ENCODE measurements at regions of chr12 and their contacts with region 1.

Region 1: DNA sequence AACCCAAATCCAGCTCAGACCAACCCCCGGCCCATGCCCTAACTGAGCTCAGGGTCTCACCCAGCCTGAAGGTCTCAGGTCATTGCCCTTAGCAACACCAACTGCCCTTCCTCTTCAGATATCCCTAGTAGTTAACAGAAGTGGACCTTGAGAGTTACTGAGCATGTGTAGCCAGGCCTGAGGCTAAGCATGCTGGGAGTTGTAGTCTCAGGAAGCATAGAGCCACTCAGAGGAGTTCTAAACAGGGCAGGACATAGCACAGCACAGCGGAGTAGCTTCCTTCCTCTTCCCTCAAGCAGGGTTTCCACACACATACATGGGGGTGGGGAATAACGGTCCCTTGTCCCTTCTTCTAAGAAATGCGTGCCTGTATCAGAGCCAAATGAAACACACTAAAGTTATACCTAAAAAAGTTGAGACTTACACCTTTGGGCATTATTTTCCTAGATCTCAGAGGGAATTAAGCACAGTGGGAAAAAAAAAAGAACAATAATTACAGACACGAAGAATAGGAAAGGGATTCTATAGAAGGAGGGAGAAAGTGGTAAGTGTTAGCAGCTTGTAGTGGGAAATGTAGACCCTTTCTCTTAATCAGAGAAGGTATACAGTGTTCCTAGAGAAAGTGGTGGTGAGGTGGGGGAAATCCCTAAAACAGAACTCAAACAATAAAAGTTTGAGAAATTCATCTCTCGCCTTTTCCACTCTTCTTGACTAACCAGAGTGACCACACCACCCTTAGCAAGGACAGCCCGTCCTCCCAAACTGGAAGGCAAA is 4.4 kb downstream of the KMT2D start:
- DNase-seq: peak in 1 of 2 donors; percentile 75
- H3K4me3 ChIP-seq: peak overlapping the region in 1 of 2 donors; percentile 99
- H3K27ac ChIP-seq: no peak overlapping the region
- H3K4me1 ChIP-seq: peaks cover 0 to 49% (median 40%) of the 10 kb centered on the region in 4 donors
- H3K27me3 ChIP-seq: no peaks in the 10 kb centered on the region
- CTCF ChIP-seq: no peak

Region 2: GRCh38 chr12:49451468-49452259 is 395.5 kb after region 1 on chr12:
- intact Hi-C with region 1: loop called (anchors 5 kb)
- DNase-seq: no peak
- H3K4me3 ChIP-seq: no peak overlapping the region
- H3K27ac ChIP-seq: no peak overlapping the region
- H3K4me1 ChIP-seq: no peaks in the 10 kb centered on the region
- H3K27me3 ChIP-seq: no peaks in the 10 kb centered on the region
- CTCF ChIP-seq: no peak

Measured in tibial artery (tissue), 4 donors.